Psoas muscle (tissue), 8 donors: ENCODE measurements at regions of chr5 and their contacts with region 1.

Region 1: GRCh38 chr5:4042311-4042710 is 446.7 kb downstream of the IRX1 start:
- DNase-seq: no peak
- ATAC-seq: no peak
- H3K4me3 ChIP-seq: no peak overlapping the region
- H3K27ac ChIP-seq: no peak overlapping the region
- H3K4me1 ChIP-seq: no peaks in the 10 kb centered on the region
- H3K27me3 ChIP-seq: no peaks in the 10 kb centered on the region
- CTCF ChIP-seq: no peak

Region 2: GRCh38 chr5:4023753-4024335 is 18.5 kb before region 1 on chr5:
- intact Hi-C with region 1: loop called in 1 of 2 experiments (anchors 1 kb)
- DNase-seq: no peak
- ATAC-seq: no peak
- H3K4me3 ChIP-seq: no peak overlapping the region
- H3K27ac ChIP-seq: no peak overlapping the region
- H3K4me1 ChIP-seq: no peaks in the 10 kb centered on the region
- H3K27me3 ChIP-seq: no peaks in the 10 kb centered on the region
- CTCF ChIP-seq: no peak